ENCODE measurements at regions of chr11 and their contacts with region 1.

Region 1: DNA sequence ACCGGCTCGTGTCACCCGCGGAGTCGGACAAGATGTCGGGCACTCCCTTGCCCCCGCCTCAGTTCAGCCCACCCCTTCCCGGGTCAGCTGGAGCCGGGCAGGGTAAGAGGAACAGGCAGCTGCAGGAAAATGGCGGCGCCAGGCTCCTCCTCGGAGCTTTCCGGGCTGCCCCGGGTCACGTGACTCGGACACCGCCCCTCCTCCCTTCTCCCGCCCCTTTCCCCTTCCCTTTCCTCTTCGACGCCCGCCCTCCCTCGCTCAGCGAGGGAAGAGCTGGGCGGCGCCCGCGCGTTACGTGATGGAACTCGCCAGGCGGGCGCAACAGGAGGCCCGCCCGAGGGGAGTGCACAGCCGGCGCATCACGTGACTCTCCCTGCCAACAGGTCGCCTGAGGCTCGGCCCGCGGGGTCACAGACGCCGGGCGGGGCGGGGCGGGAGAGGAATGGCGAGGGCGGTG is at the start of gene PICALM:
- H3K4me3 Mint-ChIP-seq: peak within 1 kb of the TSS; percentile 97
- H3K27ac Mint-ChIP-seq: peak within 1 kb of the TSS; percentile 99
- H3K4me1 Mint-ChIP-seq: peaks cover 37% of the 10 kb centered on the region
- H3K27me3 Mint-ChIP-seq: no peaks in the 10 kb centered on the region

Region 2: GRCh38 chr11:86106916-86107315 is 37.9 kb after region 1 on chr11:
- intact Hi-C with region 1: loop called (anchors 5 kb)
- H3K4me3 Mint-ChIP-seq: no peak overlapping the region
- H3K27ac Mint-ChIP-seq: no peak overlapping the region
- H3K4me1 Mint-ChIP-seq: peaks cover 24% of the 10 kb centered on the region
- H3K27me3 Mint-ChIP-seq: no peaks in the 10 kb centered on the region

Region 3: DNA sequence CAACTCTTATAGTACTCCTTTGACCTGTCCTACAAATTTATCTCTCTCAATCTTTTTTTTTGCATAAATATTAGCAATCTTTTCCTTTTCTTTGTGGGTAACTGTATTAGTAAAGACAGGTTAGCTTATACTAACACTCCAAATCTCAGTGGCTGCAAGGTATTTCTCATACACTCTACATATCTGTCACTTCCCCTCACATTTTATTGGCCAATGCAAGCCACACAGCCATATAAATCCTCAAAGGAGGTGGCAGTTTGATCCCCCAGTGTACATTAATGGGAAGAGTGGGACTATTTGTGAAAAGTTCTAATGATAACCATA is 133.0 kb after region 1 on chr11:
- intact Hi-C with region 1: loop called (anchors 5 kb)
- H3K4me3 Mint-ChIP-seq: no peak overlapping the region
- H3K27ac Mint-ChIP-seq: no peak overlapping the region
- H3K4me1 Mint-ChIP-seq: peaks cover 28% of the 10 kb centered on the region
- H3K27me3 Mint-ChIP-seq: no peaks in the 10 kb centered on the region